Sciatic nerve (tissue), 2 donors: ENCODE measurements at regions of chr12 and their contacts with region 1.

Region 1: DNA sequence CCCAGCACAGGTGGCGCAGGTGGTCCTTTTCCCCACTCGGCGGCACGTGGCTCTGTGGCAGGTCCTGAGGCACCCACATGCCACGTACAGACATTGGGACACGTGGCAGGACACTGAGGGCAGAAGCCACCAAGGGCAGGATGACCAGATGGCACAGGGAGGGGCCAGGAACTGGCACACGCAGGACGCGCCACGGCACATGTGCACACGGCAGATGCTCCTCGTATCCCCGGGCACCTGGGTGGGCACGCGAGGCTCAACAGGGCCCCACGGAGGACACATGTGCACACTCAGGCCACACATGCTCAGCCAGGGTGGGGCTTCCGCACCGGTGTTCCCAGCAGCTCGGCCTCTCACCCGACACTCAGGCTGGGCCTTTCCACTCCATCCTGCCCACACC is 52.0 kb downstream of the FBRSL1 start:
- DNase-seq: no peak
- ATAC-seq: no peak

Region 2: GRCh38 chr12:130661486-130662255 is 1880.3 kb before region 1 on chr12:
- intact Hi-C with region 1: no loop called
- DNase-seq: no peak
- ATAC-seq: no peak

Region 3: GRCh38 chr12:132103542-132104308 is 438.3 kb before region 1 on chr12:
- intact Hi-C with region 1: no loop called
- DNase-seq: no peak
- ATAC-seq: no peak

Region 4: DNA sequence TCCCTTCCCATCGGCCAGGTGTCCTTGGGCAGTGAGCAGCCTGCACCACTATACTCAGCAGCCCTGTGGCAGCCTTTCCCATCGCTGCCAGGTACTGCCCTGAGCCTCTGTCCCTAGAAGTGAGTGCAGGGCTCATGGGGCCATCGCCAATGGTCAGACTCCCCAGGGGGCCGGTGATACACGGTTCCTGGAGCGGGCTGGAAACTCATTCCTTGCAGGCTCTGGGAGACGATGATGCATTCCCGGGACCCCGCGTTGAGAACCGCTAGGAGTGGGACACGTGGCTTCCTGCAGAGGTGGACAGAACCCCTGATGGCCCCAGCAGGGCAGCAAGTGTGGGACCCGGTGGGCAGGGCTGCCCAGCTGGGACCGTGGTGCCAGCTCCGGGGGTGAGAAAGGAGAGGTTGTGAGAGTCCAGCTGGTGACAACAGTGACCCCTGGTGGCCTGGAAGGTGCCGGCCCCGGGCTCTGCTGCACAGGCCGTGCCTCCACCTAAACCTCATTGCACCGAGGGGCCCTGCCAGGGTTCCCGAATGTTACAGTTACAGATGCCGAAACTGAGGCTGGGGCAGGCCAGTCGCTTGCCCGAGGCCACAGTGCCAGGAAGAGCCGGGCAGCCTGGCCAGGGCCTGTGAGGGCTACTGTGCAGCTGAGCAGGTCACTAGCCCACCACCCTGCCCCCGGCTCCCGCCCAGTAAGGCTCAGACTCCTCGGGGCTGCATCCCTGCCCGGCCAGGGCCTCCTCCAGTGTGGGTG is 18.2 kb before region 1 on chr12:
- intact Hi-C with region 1: loop called (anchors 1 kb)
- DNase-seq: peak; percentile 86
- ATAC-seq: peak; percentile 73